A673 (cell line): ENCODE measurements at regions of chr10 and their contacts with region 1.

Region 1: GRCh38 chr10:13160934-13161856 is at the start of gene MCM10:
- DNase-seq: peak; percentile 100
- H3K4me3 ChIP-seq: peak within 1 kb of the TSS; percentile 59
- H3K27ac ChIP-seq: peak within 1 kb of the TSS; percentile 81
- H3K4me1 ChIP-seq: peaks cover 5% of the 10 kb centered on the region
- H3K27me3 ChIP-seq: no peaks in the 10 kb centered on the region
- CTCF ChIP-seq: peak; percentile 92
- total RNA-seq, gene MCM10: 89.3 and 97.5 TPM in 2 replicates

Region 2: DNA sequence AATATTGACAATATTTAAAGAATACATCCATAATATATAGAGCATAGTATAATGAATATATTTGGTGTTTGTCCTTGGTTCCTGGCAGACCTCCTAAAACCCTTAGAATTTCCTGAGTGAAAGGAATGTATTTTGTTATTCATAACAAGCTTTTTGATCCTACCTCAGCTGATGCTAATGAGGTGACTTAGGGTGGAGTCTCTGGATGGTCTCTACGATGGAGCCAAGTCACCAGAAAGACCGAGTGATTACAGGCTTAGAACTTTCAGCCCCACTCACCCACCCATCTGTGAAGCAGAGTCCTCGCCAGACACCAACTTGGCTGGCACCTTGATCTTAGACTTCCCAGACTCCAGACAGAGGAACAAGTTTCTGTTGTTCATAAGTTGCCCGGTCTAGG is 1154.5 kb before region 1 on chr10:
- CTCF ChIA-PET with region 1: no interaction called
- POLR2A ChIA-PET with region 1: no interaction called
- intact Hi-C with region 1: no loop called
- DNase-seq: no peak
- H3K4me3 ChIP-seq: no peak overlapping the region
- H3K27ac ChIP-seq: no peak overlapping the region
- H3K4me1 ChIP-seq: no peaks in the 10 kb centered on the region
- H3K27me3 ChIP-seq: no peaks in the 10 kb centered on the region
- CTCF ChIP-seq: no peak

Region 3: GRCh38 chr10:12960334-12960898 is 200.8 kb before region 1 on chr10:
- CTCF ChIA-PET with region 1: no interaction called
- POLR2A ChIA-PET with region 1: no interaction called
- intact Hi-C with region 1: no loop called
- DNase-seq: no peak
- H3K4me3 ChIP-seq: no peak overlapping the region
- H3K27ac ChIP-seq: no peak overlapping the region
- H3K4me1 ChIP-seq: no peaks in the 10 kb centered on the region
- H3K27me3 ChIP-seq: no peaks in the 10 kb centered on the region
- CTCF ChIP-seq: no peak

Region 4: DNA sequence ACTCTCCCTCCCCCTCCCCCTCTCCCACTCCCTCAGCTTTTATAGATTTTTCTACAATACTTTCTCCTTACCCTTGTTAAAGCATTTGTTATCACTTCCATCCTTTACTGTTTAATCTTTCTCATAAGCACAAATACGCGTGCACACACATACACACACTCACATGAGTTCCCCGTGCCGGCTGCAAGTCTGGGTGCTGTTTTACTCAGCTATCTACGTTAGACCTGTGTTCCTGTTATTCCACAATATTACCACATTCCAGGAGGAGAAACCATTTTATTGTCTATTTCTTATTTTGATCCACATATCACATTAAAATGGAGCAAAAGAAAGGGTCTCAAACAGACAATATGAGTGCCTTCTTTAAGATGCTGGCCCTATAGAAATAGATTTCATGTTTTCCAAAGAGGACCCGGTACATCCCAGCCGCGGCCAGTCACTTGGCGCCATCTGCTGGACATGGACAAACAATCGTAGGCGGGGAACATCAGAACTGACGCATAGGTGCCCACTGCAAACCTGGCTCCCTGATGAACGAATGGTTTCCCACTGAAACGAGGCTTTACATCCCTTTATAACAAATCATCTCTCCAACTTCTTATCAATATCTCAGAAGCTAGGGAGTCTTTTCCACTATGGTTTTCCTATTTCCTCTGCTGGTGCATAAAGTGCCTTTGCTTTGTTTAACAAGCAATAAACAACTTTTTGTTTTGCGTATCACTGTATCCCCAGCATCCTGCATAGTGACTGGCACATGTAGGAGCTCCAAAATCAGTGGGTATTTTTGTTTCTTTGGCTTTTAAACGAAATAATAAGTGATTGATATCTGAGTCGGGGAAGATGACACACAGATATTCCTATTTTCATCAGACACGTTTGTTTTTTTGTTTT is 86.4 kb before region 1 on chr10:
- CTCF ChIA-PET with region 1: no interaction called
- POLR2A ChIA-PET with region 1: no interaction called
- intact Hi-C with region 1: no loop called
- DNase-seq: peak; percentile 85
- H3K4me3 ChIP-seq: no peak overlapping the region
- H3K27ac ChIP-seq: no peak overlapping the region
- H3K4me1 ChIP-seq: peaks cover 2% of the 10 kb centered on the region
- H3K27me3 ChIP-seq: no peaks in the 10 kb centered on the region
- CTCF ChIP-seq: peak; percentile 94

Region 5: GRCh38 chr10:13099666-13100348 is 61.4 kb before region 1 on chr10 and contains the start of gene OPTN:
- CTCF ChIA-PET with region 1: no interaction called
- POLR2A ChIA-PET with region 1: no interaction called
- intact Hi-C with region 1: loop called (anchors 5 kb)
- DNase-seq: peak; percentile 87
- H3K4me3 ChIP-seq: peak within 1 kb of the TSS; percentile 78
- H3K27ac ChIP-seq: no peak within 1 kb of the TSS
- H3K4me1 ChIP-seq: peaks cover 6% of the 10 kb centered on the region
- H3K27me3 ChIP-seq: no peaks in the 10 kb centered on the region
- CTCF ChIP-seq: peak; percentile 76
- total RNA-seq, gene OPTN: 13.5 and 16.6 TPM in 2 replicates

Region 6: GRCh38 chr10:13302814-13303555 is 141.8 kb after region 1 on chr10:
- CTCF ChIA-PET with region 1: interaction called, 11 read pairs
- POLR2A ChIA-PET with region 1: no interaction called
- intact Hi-C with region 1: loop called (anchors 1 kb)
- DNase-seq: no peak
- H3K4me3 ChIP-seq: peak overlapping the region; percentile 63
- H3K27ac ChIP-seq: no peak overlapping the region
- H3K4me1 ChIP-seq: peaks cover 5% of the 10 kb centered on the region
- H3K27me3 ChIP-seq: no peaks in the 10 kb centered on the region
- CTCF ChIP-seq: no peak